ENCODE measurements at regions of chr13 and their contacts with region 1.

Region 1: DNA sequence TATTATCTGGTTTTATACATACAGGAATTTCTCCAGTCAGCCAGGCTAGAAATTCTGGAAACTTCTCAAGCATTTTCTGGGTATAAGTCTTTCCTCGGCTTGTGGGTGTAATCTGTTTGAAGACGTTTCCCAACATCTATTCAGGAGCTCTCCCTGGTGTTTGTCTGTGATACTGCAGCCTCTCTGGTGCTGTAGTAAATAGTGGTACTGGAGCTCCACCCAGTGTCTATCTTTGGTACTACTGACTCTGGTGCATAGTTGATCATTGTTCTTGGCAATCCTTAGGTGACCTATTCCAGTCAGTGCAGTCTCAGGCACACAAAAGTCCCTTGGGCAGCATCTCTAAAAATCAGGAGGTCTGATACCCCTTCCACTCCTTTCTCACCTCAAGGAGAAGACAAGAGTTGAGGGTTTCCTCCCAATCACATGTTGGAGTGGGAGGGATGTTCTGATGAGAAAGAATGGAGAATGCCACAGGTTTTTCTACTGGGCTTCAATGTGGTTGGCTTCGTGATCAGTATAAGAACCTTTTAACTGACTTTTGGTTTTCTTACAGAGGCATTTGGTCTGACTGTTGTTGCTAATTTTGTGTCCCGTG is 115.5 kb downstream of the CYSLTR2 start:
- DNase-seq: peak; percentile 68 to 89 (median 82)
- ATAC-seq: peak; percentile 100
- H3K4me3 ChIP-seq: no peak overlapping the region
- H3K4me3 Mint-ChIP-seq: no peak overlapping the region
- H3K27ac ChIP-seq: no peak overlapping the region
- H3K27ac Mint-ChIP-seq: no peak overlapping the region
- H3K4me1 ChIP-seq: no peaks in the 10 kb centered on the region
- H3K4me1 Mint-ChIP-seq: peaks cover 3% of the 10 kb centered on the region
- H3K27me3 ChIP-seq: no peaks in the 10 kb centered on the region
- H3K27me3 Mint-ChIP-seq: peaks cover 4% of the 10 kb centered on the region
- CTCF ChIP-seq: peak; percentile 98

Region 2: DNA sequence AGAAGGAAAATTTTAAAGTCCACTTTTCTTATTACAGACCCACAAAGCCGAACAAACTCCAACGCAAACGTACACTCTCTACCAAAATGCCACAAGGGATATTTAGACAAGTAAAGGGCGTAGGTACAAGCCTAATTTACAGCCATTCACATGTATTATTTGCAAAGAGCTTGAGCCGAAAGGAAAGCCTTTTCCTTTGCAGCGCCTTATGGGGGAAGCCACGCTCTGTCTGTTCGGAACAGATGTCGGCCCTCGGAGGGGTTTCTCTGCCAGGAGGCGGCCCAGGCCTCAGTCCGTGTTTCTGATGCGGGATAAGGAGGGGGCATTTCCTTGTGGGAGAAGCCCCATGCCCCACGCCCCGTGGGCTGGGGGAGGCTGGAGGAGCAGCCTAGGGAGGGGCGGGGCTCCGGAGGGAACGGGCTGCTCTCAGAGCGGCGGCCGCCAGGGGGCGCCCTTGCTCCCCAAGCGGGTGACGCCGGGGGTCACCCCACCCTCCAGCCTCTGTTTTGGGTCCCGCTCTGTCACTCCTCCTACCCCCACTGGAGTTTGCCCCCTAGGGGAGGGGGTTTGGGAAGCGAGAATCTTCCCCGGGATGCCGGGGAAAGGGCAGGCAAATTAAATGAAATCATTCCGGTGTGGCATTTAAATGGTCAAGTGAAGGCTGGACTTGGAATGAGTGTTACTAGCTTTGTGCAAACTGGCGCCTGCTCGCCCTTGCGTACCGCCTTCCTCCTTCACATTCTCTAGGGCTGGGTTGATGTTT is 1875.2 kb before region 1 on chr13:
- CTCF ChIA-PET with region 1: no interaction called
- POLR2A ChIA-PET with region 1: no interaction called
- intact Hi-C with region 1: loop called (anchors 2 to 5 kb)
- DNase-seq: peak; percentile 22 to 74 (median 61)
- ATAC-seq: peak; percentile 90
- H3K4me3 ChIP-seq: peak overlapping the region; percentile 29 to 43
- H3K4me3 Mint-ChIP-seq: peak overlapping the region; percentile 71
- H3K27ac ChIP-seq: no peak overlapping the region
- H3K27ac Mint-ChIP-seq: no peak overlapping the region
- H3K4me1 ChIP-seq: no peaks in the 10 kb centered on the region
- H3K4me1 Mint-ChIP-seq: peaks cover 25% of the 10 kb centered on the region
- H3K27me3 ChIP-seq: peaks cover 0 to 8% of the 10 kb centered on the region in 2 experiments
- H3K27me3 Mint-ChIP-seq: peaks cover 50% of the 10 kb centered on the region
- CTCF ChIP-seq: peak; percentile 86

Region 3: GRCh38 chr13:48334534-48335127 is 434.6 kb before region 1 on chr13:
- CTCF ChIA-PET with region 1: interaction called, 18 read pairs
- POLR2A ChIA-PET with region 1: no interaction called
- intact Hi-C with region 1: loop called (anchors 1 to 2 kb)
- DNase-seq: peak in 2 of 9 experiments; percentile 63 to 73
- ATAC-seq: peak; percentile 66
- H3K4me3 ChIP-seq: no peak overlapping the region
- H3K4me3 Mint-ChIP-seq: no peak overlapping the region
- H3K27ac ChIP-seq: no peak overlapping the region
- H3K27ac Mint-ChIP-seq: no peak overlapping the region
- H3K4me1 ChIP-seq: no peaks in the 10 kb centered on the region
- H3K4me1 Mint-ChIP-seq: peaks cover 7% of the 10 kb centered on the region
- H3K27me3 ChIP-seq: no peaks in the 10 kb centered on the region
- H3K27me3 Mint-ChIP-seq: no peaks in the 10 kb centered on the region
- CTCF ChIP-seq: peak; percentile 88

Region 4: DNA sequence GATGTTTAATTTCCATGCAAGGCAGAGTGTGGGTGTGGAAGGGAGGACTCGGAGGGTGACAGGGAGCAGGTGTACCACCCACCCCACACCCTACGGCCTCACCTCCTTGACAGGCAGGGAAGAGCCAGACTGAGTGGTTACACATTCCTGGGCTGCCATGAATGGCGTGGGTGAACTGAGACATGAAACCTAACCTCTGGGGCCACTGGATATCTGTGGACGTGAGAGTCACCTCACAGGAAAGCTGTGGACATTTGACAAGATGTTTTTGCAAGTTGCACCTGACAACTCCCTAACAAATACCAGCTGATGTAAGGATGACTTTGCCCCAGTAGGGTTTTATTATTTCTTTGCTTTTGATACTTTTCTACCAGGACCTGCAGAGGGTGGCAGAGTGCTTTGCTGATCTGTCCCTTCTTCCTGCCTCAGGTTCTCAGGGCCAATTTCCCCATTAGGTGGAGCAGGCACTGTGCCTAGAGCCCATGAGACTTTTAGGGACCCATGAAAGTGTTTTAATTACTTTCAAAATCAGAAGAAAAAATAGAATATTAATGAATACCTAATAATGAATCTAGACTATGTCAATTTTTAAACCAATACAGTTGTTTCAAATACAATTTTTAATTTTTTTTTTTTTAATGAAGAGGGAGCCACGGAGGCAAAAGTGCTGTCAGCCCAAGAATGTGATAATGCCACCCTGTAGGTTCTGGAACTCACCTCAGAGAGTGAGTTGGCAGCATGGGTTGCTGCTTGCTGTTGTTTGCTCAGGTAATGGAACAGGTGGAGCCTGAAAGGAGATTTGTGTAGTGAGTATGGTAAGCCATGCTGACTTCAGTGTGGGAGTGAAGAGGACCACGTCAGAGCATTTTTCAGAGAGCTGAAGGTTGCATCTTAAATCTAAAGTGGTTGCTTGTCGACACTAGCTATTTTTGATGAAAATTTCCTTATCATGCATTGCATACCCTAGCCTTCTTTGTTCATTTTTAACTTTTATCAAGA is 173.5 kb before region 1 on chr13:
- CTCF ChIA-PET with region 1: interaction called, 74 read pairs
- POLR2A ChIA-PET with region 1: no interaction called
- intact Hi-C with region 1: loop called (anchors 1 kb)
- DNase-seq: peak; percentile 20 to 83 (median 48)
- ATAC-seq: peak; percentile 81
- H3K4me3 ChIP-seq: no peak overlapping the region
- H3K4me3 Mint-ChIP-seq: no peak overlapping the region
- H3K27ac ChIP-seq: no peak overlapping the region
- H3K27ac Mint-ChIP-seq: no peak overlapping the region
- H3K4me1 ChIP-seq: no peaks in the 10 kb centered on the region
- H3K4me1 Mint-ChIP-seq: no peaks in the 10 kb centered on the region
- H3K27me3 ChIP-seq: no peaks in the 10 kb centered on the region
- H3K27me3 Mint-ChIP-seq: no peaks in the 10 kb centered on the region
- CTCF ChIP-seq: peak; percentile 48

Region 5: GRCh38 chr13:48731957-48732569 is 37.1 kb before region 1 on chr13:
- CTCF ChIA-PET with region 1: interaction called, 12 read pairs
- POLR2A ChIA-PET with region 1: no interaction called
- intact Hi-C with region 1: loop called in 1 of 2 experiments (anchors 1 kb)
- DNase-seq: peak; percentile 29 to 72 (median 61)
- ATAC-seq: peak; percentile 77
- H3K4me3 ChIP-seq: peak overlapping the region; percentile 9 to 29
- H3K4me3 Mint-ChIP-seq: peak overlapping the region; percentile 74
- H3K27ac ChIP-seq: no peak overlapping the region
- H3K27ac Mint-ChIP-seq: no peak overlapping the region
- H3K4me1 ChIP-seq: no peaks in the 10 kb centered on the region
- H3K4me1 Mint-ChIP-seq: peaks cover 2% of the 10 kb centered on the region
- H3K27me3 ChIP-seq: no peaks in the 10 kb centered on the region
- H3K27me3 Mint-ChIP-seq: no peaks in the 10 kb centered on the region
- CTCF ChIP-seq: peak; percentile 70

Region 6: DNA sequence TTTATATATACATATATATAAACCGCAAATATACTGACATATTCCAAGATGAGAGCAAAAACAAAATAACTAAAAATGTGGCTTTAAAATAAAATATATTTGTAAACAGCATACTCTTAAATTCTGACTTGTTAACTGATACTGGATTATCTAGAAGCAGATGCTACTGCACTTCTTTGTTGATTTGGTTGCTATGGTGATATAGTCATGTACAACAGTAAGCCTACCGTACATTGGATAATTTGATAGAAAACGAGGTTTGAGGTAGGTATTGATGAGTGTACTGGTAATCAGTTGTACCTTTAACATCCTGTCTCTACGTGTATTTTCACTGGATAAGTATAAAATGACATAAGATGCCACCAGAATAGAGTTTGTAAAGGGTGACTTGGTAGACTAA is 263.9 kb after region 1 on chr13:
- CTCF ChIA-PET with region 1: no interaction called
- POLR2A ChIA-PET with region 1: no interaction called
- intact Hi-C with region 1: no loop called
- DNase-seq: no peak
- ATAC-seq: no peak
- H3K4me3 ChIP-seq: no peak overlapping the region
- H3K4me3 Mint-ChIP-seq: no peak overlapping the region
- H3K27ac ChIP-seq: no peak overlapping the region
- H3K27ac Mint-ChIP-seq: peak overlapping the region; percentile 38
- H3K4me1 ChIP-seq: no peaks in the 10 kb centered on the region
- H3K4me1 Mint-ChIP-seq: no peaks in the 10 kb centered on the region
- H3K27me3 ChIP-seq: no peaks in the 10 kb centered on the region
- H3K27me3 Mint-ChIP-seq: no peaks in the 10 kb centered on the region
- CTCF ChIP-seq: no peak

Measured in CD8-positive, alpha-beta T cell (primary cell).